ENCODE measurements at regions of chr2 and their contacts with region 1.

Region 1: GRCh38 chr2:47437287-47437686 is 34.3 kb downstream of the MSH2 start:
- DNase-seq: peak; percentile 40 to 51
- ATAC-seq: peak; percentile 58 to 68; a peak in 4 of 6 replicates
- H3K4me3 ChIP-seq: no peak overlapping the region
- H3K27ac ChIP-seq: no peak overlapping the region
- H3K4me1 ChIP-seq: no peaks in the 10 kb centered on the region
- CTCF ChIP-seq: peak; percentile 83
- EP300 ChIP-seq: no peak
- POLR2A ChIP-seq: no peak
- RAD21 ChIP-seq: peak; percentile 64 to 86

Region 2: DNA sequence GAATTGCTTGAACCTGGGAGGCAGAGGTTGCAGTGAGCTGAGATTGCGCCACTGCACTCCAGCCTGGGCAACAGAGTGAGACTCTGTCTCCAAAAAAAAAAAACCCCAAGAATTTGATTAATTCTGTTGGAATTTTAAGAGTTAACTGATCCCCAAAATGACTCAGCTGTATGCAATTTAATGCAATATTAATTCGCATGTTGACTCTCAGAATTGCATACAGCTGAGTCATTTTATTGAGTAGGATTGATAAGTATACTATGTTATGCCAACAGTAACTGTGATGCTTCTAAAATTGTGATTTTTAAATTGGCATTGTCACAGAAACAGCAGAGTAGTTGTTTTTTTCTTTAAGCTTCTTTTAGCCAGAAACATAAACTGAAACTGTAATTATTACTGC is 14.7 kb before region 1 on chr2:
- CTCF ChIA-PET with region 1: interaction called, 19 read pairs
- POLR2A ChIA-PET with region 1: no interaction called
- DNase-seq: peak; percentile 23 to 29
- ATAC-seq: peak in 1 of 2 experiments; percentile 72; a peak in 3 of 6 replicates
- H3K4me3 ChIP-seq: no peak overlapping the region
- H3K27ac ChIP-seq: peak overlapping the region in 1 of 2 experiments; percentile 65; a peak in 3 of 6 replicates
- H3K4me1 ChIP-seq: peaks cover 11% of the 10 kb centered on the region; the same call in 2 of the 3 replicates
- CTCF ChIP-seq: no peak
- EP300 ChIP-seq: no peak
- POLR2A ChIP-seq: no peak
- RAD21 ChIP-seq: no peak

Region 3: GRCh38 chr2:47452761-47453160 is 15.5 kb after region 1 on chr2:
- CTCF ChIA-PET with region 1: interaction called, 14 read pairs
- POLR2A ChIA-PET with region 1: no interaction called
- DNase-seq: no peak
- ATAC-seq: no peak
- H3K4me3 ChIP-seq: no peak overlapping the region
- H3K27ac ChIP-seq: no peak overlapping the region
- H3K4me1 ChIP-seq: no peaks in the 10 kb centered on the region
- CTCF ChIP-seq: no peak
- EP300 ChIP-seq: no peak
- POLR2A ChIP-seq: no peak
- RAD21 ChIP-seq: no peak

Region 4: DNA sequence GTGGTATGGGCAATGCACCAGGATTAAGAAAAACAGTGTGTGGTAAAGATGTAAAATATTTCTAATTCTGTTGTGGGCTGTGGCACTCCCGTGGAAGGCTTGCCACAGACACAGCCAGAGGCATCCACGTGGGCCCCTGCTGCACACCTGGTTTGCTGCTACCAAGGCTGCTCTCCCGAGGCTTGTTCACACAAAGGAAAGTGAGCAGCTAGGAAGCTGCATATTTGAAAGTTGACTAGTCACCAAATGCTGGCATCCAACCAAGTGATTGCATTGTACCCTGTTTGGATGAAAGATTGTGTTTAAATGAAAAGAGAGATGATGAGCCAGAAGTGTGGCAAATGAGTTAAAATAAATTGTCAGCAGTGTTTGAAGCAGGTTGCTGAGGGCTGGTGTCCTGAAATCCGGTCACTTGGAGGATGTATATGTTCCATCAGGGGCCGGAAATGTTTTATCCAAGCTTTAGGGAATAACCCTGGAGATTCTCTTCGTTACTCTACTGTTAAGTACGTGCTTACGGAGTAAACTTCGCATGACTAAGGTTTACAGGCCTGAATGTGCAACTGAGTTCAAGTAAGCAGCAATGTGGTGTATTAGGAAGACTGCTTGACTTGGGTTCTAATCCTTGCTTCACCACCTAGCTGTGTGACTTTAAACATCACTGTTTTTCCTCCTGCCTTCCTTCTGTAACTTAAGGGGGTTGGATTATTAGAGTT is 51.7 kb after region 1 on chr2:
- CTCF ChIA-PET with region 1: interaction called, 11 read pairs
- POLR2A ChIA-PET with region 1: no interaction called
- DNase-seq: peak; percentile 44 to 74
- ATAC-seq: peak; percentile 90 to 93
- H3K4me3 ChIP-seq: no peak overlapping the region
- H3K27ac ChIP-seq: peak overlapping the region; percentile 6 to 64; a peak in 3 of 6 replicates
- H3K4me1 ChIP-seq: peaks cover 26% of the 10 kb centered on the region
- CTCF ChIP-seq: no peak
- EP300 ChIP-seq: no peak
- POLR2A ChIP-seq: no peak
- RAD21 ChIP-seq: no peak

Region 5: DNA sequence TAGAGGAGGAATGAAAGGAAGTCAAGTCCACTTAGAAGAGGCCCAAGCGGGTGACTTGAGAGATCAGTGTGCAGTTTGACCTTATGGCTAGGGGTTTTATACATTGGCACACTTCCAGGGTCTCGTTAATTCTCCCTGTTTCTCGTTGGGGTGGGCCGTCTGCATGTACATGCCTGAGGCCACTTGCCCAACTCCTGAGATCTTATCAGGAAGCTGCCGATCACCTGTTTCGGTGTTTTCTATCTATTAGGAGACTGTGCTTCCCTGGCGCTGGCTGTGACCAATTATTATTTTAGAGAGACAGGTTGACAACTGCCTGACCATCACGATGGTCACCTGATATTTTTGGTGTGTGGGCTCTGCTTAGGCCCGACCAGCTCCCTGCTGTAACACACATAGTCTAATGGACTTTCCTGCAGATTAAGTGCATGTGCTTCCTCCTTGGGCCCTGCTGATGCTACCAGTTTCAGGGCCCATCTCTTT is 314.6 kb after region 1 on chr2:
- CTCF ChIA-PET with region 1: interaction called, 11 read pairs
- POLR2A ChIA-PET with region 1: no interaction called
- DNase-seq: no peak
- ATAC-seq: peak in 1 of 2 experiments; percentile 22; a peak in 2 of 6 replicates
- H3K4me3 ChIP-seq: no peak overlapping the region
- H3K27ac ChIP-seq: no peak overlapping the region
- H3K4me1 ChIP-seq: no peaks in the 10 kb centered on the region
- CTCF ChIP-seq: no peak
- EP300 ChIP-seq: no peak
- POLR2A ChIP-seq: no peak
- RAD21 ChIP-seq: no peak